CD8-positive, alpha-beta memory T cell (primary cell): ENCODE measurements at regions of chr15 and their contacts with region 1.

Region 1: DNA sequence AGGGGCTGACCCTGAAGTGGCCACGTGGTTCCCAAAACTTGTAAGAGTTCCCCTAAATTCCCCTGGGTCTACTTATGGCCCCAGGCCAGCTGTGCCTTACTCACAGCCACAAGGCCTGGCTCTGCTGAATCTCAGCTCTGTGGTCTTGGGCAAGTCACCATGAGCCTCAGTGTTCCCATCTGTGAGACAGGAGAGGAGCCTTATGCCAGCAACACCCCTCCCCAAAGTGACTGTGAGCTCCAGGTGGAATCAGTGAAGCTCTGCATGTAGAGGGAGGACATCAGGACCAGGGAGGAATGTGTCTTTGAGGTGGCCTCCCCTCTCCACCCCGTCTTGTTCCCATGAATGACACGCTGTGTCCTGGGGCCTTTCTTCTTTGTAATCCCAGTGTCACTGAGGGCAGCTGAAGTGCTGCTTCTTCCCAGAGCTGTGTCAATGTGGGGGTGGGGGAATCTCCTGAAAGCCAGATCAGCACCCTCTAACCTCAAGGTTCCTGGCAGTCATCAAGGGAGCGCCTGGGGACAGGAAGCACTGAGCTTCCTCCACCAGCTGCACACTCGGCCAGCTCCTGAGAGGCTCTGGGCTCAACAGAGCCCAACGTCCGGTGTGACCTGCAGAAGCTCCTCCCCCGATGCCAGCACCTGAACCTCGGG is 258.9 kb downstream of the UACA start:
- DNase-seq: no peak
- H3K4me3 ChIP-seq: peak overlapping the region; percentile 35
- H3K4me3 Mint-ChIP-seq: peak overlapping the region in 6 of 7 donors; percentile 32 to 82 (median 50)
- H3K27ac ChIP-seq: no peak overlapping the region
- H3K27ac Mint-ChIP-seq: peak overlapping the region in 2 of 8 donors; percentile 14 to 36
- H3K4me1 ChIP-seq: peaks cover 49% of the 10 kb centered on the region
- H3K4me1 Mint-ChIP-seq: peaks cover 43 to 56% (median 52%) of the 10 kb centered on the region in 3 donors
- H3K27me3 ChIP-seq: no peaks in the 10 kb centered on the region
- H3K27me3 Mint-ChIP-seq: no peaks in the 10 kb centered on the region

Region 2: GRCh38 chr15:70474471-70475396 is 29.7 kb before region 1 on chr15:
- CTCF ChIA-PET with region 1: no interaction called
- POLR2A ChIA-PET with region 1: no interaction called
- DNase-seq: peak in 3 of 5 donors; percentile 22 to 61 (median 26)
- H3K4me3 ChIP-seq: peak overlapping the region; percentile 38
- H3K4me3 Mint-ChIP-seq: peak overlapping the region in 6 of 7 donors; percentile 57 to 75 (median 66)
- H3K27ac ChIP-seq: no peak overlapping the region
- H3K27ac Mint-ChIP-seq: peak overlapping the region in 2 of 8 donors; percentile 47 to 61
- H3K4me1 ChIP-seq: peaks cover 36% of the 10 kb centered on the region
- H3K4me1 Mint-ChIP-seq: peaks cover 35 to 49% (median 36%) of the 10 kb centered on the region in 3 donors
- H3K27me3 ChIP-seq: peaks cover 4% of the 10 kb centered on the region
- H3K27me3 Mint-ChIP-seq: peaks cover 5 to 23% of the 10 kb centered on the region in 2 donors

Region 3: DNA sequence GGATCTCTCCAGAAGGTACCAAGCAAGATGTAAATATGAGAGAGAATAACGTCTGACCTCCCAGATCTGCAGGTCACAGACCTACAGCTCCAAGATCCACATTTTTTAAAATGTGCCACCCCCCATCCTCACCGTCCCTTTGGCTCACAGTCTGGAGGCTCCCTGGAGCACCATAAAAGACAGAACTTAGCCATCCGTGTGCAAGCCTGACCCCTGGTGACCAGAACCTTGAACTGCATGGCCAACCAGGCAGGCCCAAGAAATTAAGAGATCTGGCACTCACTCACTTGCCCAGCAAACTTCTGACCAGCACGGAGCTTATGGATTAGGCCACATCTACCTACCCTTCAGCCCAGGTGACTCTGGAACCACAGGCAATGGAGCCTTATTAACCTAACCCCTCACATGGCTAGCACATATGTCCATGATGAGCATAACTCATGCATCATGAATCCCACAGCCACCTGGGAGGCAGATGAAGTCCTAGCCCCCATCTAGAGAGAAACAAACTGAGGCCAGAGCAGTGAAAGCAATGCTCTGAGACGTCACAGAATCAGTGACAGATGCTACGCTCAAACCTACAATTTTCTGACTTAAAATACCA is 16.3 kb before region 1 on chr15:
- CTCF ChIA-PET with region 1: interaction called, 34 read pairs
- POLR2A ChIA-PET with region 1: no interaction called
- DNase-seq: peak; percentile 55 to 80 (median 60)
- H3K4me3 ChIP-seq: no peak overlapping the region
- H3K4me3 Mint-ChIP-seq: peak overlapping the region in 1 of 7 donors; percentile 13
- H3K27ac ChIP-seq: no peak overlapping the region
- H3K27ac Mint-ChIP-seq: peak overlapping the region in 2 of 8 donors; percentile 11 to 68
- H3K4me1 ChIP-seq: peaks cover 66% of the 10 kb centered on the region
- H3K4me1 Mint-ChIP-seq: peaks cover 60 to 68% (median 63%) of the 10 kb centered on the region in 3 donors
- H3K27me3 ChIP-seq: no peaks in the 10 kb centered on the region
- H3K27me3 Mint-ChIP-seq: peaks cover 8 to 17% of the 10 kb centered on the region in 2 donors

Region 4: DNA sequence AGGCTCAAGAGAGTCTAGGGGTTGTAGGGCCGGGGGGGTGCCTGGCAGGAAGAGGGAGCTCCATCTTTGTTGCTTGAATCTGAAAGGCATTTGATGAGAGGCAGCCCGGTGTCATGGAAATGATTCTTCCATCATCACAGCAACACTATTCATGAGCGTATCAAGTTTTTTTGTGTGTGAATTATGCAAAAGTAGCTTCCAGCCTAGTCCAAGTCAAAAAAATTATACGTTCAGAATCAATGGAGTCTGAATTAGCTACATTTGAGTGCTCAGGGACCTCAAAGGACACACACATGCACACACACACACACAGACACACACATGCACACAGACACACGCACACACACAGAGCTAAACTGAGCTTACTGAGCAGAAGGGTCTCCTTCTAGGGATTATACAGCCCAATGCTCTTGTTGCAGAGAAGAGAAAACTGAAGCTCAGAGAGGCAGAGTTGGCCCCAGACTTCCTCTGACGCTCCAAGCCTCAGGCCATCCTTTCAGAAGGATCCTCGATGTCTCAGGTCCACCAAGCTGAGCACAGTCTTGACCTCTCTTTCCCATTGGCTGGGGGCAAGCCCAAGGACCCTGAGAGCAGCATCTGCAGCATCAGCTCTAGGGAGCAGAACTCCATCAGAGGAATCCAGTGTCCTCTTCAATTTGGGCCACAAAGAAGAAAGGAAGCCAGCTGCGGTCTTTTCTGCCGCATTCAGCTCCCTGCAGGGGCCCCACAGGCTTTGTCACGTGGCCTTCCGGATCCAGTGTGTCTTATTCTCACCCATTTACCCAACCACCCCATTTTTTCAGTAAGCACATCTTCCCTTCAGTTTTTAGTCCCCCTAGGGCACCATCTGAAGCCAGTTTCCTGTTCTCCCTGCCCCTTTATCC is 30.9 kb after region 1 on chr15:
- CTCF ChIA-PET with region 1: interaction called, 10 read pairs
- POLR2A ChIA-PET with region 1: interaction called, 3 read pairs
- DNase-seq: peak; percentile 30 to 77 (median 62)
- H3K4me3 ChIP-seq: peak overlapping the region; percentile 79
- H3K4me3 Mint-ChIP-seq: peak overlapping the region; percentile 82 to 93 (median 88)
- H3K27ac ChIP-seq: no peak overlapping the region
- H3K27ac Mint-ChIP-seq: peak overlapping the region; percentile 38 to 96 (median 86)
- H3K4me1 ChIP-seq: peaks cover 59% of the 10 kb centered on the region
- H3K4me1 Mint-ChIP-seq: peaks cover 51 to 77% (median 55%) of the 10 kb centered on the region in 3 donors
- H3K27me3 ChIP-seq: no peaks in the 10 kb centered on the region
- H3K27me3 Mint-ChIP-seq: peaks cover 0 to 2% of the 10 kb centered on the region in 2 donors

Region 5: GRCh38 chr15:70559265-70560239 is 55.1 kb after region 1 on chr15:
- CTCF ChIA-PET with region 1: no interaction called
- POLR2A ChIA-PET with region 1: no interaction called
- DNase-seq: peak; percentile 38 to 84 (median 68)
- H3K4me3 ChIP-seq: peak overlapping the region; percentile 67
- H3K4me3 Mint-ChIP-seq: peak overlapping the region in 3 of 7 donors; percentile 20 to 65 (median 25)
- H3K27ac ChIP-seq: no peak overlapping the region
- H3K27ac Mint-ChIP-seq: peak overlapping the region in 1 of 8 donors; percentile 48
- H3K4me1 ChIP-seq: peaks cover 67% of the 10 kb centered on the region
- H3K4me1 Mint-ChIP-seq: peaks cover 0 to 6% (median 4%) of the 10 kb centered on the region in 3 donors
- H3K27me3 ChIP-seq: no peaks in the 10 kb centered on the region
- H3K27me3 Mint-ChIP-seq: no peaks in the 10 kb centered on the region

Region 6: DNA sequence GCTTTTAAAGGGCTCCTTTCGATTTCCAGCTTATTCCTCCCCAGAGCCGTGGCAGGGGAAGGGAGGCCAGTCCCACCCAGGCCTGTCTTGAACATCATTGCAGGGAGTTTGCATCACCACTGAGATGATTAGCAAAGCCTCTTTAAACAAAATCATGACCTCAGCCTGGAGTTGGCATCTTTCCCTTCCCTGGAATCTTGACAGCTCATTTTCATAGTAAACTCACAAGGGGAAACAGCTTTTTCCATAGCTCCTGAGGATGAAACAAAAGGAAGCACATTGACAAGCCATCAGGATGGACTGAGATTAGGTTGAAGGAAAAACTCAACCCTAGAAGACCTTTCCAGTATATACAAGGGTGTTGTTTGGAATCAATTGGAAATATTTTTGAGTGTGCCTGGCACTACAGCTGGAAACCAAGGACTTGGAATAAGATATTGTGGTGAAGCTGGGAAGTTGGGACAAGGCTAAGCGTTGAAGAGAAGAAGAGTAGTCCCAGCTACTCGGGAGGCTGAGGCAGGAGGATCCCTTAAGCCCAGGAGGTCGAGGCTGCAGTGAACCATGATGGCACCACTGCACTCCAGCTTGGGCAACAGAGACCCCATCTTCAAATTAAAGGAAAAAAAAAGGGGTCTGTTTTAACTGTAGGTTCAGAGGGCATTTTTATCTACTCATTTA is 352.6 kb after region 1 on chr15:
- CTCF ChIA-PET with region 1: no interaction called
- POLR2A ChIA-PET with region 1: no interaction called
- DNase-seq: no peak
- H3K4me3 ChIP-seq: no peak overlapping the region
- H3K4me3 Mint-ChIP-seq: no peak overlapping the region
- H3K27ac ChIP-seq: no peak overlapping the region
- H3K27ac Mint-ChIP-seq: no peak overlapping the region
- H3K4me1 ChIP-seq: no peaks in the 10 kb centered on the region
- H3K4me1 Mint-ChIP-seq: peaks cover 6 to 12% (median 6%) of the 10 kb centered on the region in 3 donors
- H3K27me3 ChIP-seq: peaks cover 7% of the 10 kb centered on the region
- H3K27me3 Mint-ChIP-seq: peaks cover 22 to 55% of the 10 kb centered on the region in 2 donors